Sciatic nerve (tissue), 2 donors: ENCODE measurements at regions of chr7 and their contacts with region 1.

Region 1: DNA sequence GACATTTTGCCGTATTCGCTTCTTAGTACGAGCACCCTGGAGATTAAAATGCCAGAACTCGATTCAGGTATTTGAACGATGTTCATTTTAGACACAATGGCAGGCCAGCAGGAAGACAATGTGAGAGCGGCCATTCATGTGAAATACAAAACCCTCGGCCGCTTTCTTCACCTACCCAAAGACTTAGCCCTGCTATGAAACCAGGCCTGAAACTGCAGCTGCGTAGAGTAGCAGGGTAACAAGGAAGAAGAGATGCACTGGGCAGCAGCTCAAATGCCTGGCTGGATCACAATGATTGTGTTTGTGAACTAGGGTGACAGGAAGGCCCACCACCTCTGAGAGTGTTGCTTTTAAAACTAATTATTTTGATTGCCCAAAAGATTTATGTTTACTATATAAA is 234.8 kb downstream of the TRIL start:
- DNase-seq: no peak
- ATAC-seq: no peak

Region 2: DNA sequence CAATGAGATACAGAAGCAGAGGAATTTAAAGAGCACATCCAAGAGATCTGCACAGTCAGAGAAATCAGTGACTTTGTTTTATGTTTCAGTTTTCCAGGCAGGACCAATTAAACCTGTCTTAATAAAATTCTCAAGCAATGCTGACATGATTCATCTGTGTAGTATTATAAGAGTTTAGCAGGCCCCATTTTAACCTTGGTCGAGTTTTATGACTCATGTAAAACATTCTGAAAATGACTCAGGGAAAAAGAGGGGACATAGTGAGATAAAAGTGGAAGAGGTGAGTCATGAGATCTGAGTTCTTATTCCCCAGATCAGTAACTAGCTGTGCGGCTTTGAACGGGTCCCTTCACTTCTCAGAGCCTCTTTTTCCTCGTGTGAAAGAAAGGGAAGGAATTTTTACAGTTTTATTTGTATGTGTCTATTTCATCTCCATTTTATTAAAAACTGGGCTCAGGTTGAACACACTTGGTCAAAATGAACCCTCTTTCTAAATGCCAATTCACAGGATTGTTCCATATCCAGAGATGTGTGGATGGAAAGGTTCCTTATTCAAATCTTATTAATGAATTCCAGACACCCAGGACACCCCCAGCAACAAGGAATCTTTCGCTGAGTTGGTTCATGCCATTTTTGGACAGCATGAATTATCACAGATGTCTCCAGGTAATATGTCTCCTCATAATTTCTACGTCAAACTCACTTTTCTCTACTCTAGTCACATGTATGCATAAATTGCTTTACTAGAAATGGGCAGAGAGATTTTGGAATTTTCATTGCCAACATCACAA is 685.9 kb before region 1 on chr7:
- intact Hi-C with region 1: no loop called
- DNase-seq: no peak
- ATAC-seq: peak; percentile 82

Region 3: GRCh38 chr7:28685644-28686417 is 37.5 kb before region 1 on chr7:
- intact Hi-C with region 1: loop called (anchors 1 kb)
- DNase-seq: peak; percentile 94
- ATAC-seq: peak; percentile 97